Motor neuron (in vitro differentiated cells): ENCODE measurements at regions of chr10 and their contacts with region 1.

Region 1: DNA sequence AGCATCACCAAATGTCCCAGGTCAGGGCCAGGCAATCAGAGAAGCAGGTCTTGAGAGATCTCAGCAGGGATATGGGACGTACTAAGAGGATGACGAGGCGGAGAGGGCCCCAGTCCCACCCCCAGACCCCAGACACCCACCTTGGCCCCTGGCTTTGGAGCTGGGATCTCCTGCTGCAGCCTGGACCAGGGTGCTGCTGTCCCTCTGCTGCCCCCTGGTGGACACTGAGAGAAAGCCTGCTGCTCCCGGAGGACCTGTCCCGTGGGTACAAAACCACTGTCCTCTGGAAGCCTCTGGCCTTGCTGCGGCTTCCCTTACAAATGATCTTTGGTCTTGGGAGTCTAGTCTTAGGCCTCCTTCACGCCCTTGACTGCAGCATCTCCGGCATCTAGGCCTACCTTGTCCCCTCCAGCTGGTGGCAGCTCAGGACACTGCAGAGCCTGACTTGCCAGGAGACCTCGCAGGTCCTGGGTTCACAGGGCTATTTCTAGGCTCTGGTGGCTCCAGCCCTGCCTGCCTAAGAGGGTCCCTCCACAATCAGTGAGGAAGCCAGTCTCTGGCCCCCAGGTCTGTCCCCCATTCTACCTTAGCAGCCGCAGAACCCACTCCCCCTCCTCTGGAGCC is 97.1 kb downstream of the RGS10 start:
- ATAC-seq: peak; percentile 47 to 90 (median 60)
- H3K4me3 ChIP-seq: no peak overlapping the region
- H3K27ac ChIP-seq: no peak overlapping the region
- H3K4me1 ChIP-seq: peaks cover 32 to 37% of the 10 kb centered on the region in 2 donors

Region 2: GRCh38 chr10:119199231-119199992 is 246.0 kb before region 1 on chr10:
- in situ Hi-C with region 1: loop called in 2 of 9 experiments (anchors 10 to 25 kb)
- ATAC-seq: peak; percentile 98 to 100 (median 99)
- H3K4me3 ChIP-seq: no peak overlapping the region
- H3K27ac ChIP-seq: no peak overlapping the region
- H3K4me1 ChIP-seq: peaks cover 0 to 2% of the 10 kb centered on the region in 2 donors

Region 3: DNA sequence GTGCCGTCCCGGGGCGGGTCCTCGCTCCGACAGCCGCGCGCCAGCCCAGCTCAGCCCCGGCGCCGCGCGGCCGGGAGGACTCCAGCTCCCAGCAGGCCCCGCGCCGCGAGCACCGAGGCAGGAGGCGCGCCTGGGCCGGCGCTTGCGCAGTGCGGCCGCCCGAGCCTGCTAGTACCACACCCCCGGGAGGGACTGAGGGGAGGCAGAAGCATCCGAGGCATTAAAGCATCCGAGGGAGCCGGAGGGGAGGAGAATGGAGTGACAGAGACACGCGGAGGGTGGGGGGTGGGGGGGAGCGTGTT is 238.1 kb before region 1 on chr10 and contains the start of gene GRK5:
- in situ Hi-C with region 1: loop called in 1 of 9 experiments (anchors 25 kb)
- ATAC-seq: peak; percentile 77 to 89 (median 85)
- H3K4me3 ChIP-seq: peak within 1 kb of the TSS; percentile 62 to 90 (median 70)
- H3K27ac ChIP-seq: peak within 1 kb of the TSS; percentile 83 to 86
- H3K4me1 ChIP-seq: peaks cover 26 to 28% of the 10 kb centered on the region in 2 donors
- total RNA-seq, gene GRK5: 4.0 to 27.2 (median 11.1) TPM